CD8-positive, alpha-beta T cell (primary cell): ENCODE measurements at regions of chr13 and their contacts with region 1.

Region 1: DNA sequence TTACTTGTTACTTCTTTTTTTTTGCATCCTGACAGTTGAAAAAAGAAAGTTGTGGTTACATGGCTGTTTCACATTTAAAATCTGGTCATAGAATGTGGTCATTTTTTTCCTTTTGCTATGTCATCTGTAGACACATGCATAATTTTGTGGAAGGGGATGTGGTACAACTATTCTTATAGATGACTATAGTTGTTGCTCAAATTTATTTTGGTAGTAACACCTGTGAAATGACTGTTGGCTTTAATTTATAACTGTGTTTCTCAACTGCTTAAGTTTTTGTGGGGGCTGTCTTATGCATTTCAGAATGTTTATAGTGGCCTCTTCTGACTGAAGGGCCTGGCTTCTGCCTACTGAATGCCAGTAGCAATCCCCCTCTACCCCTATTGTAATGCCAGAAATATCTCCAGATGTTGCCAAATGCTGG is 130.5 kb downstream of the PAN3 start:
- DNase-seq: peak in 2 of 9 experiments; percentile 19 to 58
- ATAC-seq: peak; percentile 58
- H3K4me3 ChIP-seq: no peak overlapping the region
- H3K4me3 Mint-ChIP-seq: no peak overlapping the region
- H3K27ac ChIP-seq: no peak overlapping the region
- H3K27ac Mint-ChIP-seq: peak overlapping the region; percentile 3
- H3K4me1 ChIP-seq: no peaks in the 10 kb centered on the region
- H3K4me1 Mint-ChIP-seq: peaks cover 11% of the 10 kb centered on the region
- H3K27me3 ChIP-seq: no peaks in the 10 kb centered on the region
- H3K27me3 Mint-ChIP-seq: no peaks in the 10 kb centered on the region
- CTCF ChIP-seq: no peak

Region 2: DNA sequence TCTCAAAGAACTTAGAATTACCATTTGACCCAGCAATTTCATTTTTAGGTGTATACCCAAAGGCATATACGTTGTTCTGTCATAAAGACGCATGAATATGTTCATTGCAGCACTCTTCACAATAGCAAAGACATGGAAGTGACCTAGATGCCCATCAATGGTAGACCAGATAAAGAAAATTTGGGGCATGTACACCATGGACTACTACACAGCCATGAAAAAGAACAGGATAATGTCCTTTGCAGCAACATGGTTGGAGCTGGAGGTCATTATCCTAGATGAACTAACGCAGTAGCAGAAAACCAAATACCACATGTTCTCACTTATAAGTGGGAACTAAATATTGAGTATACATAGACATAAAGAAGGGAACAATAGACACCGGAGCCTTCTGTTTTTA is 109.8 kb before region 1 on chr13:
- CTCF ChIA-PET with region 1: no interaction called
- POLR2A ChIA-PET with region 1: no interaction called
- intact Hi-C with region 1: loop called in 1 of 2 experiments (anchors 10 kb)
- DNase-seq: no peak
- ATAC-seq: no peak
- H3K4me3 ChIP-seq: no peak overlapping the region
- H3K4me3 Mint-ChIP-seq: no peak overlapping the region
- H3K27ac ChIP-seq: no peak overlapping the region
- H3K27ac Mint-ChIP-seq: no peak overlapping the region
- H3K4me1 ChIP-seq: peaks cover 19% of the 10 kb centered on the region
- H3K4me1 Mint-ChIP-seq: peaks cover 60% of the 10 kb centered on the region
- H3K27me3 ChIP-seq: no peaks in the 10 kb centered on the region
- H3K27me3 Mint-ChIP-seq: no peaks in the 10 kb centered on the region
- CTCF ChIP-seq: no peak